ENCODE measurements at regions of chr1 and their contacts with region 1.

Region 1: DNA sequence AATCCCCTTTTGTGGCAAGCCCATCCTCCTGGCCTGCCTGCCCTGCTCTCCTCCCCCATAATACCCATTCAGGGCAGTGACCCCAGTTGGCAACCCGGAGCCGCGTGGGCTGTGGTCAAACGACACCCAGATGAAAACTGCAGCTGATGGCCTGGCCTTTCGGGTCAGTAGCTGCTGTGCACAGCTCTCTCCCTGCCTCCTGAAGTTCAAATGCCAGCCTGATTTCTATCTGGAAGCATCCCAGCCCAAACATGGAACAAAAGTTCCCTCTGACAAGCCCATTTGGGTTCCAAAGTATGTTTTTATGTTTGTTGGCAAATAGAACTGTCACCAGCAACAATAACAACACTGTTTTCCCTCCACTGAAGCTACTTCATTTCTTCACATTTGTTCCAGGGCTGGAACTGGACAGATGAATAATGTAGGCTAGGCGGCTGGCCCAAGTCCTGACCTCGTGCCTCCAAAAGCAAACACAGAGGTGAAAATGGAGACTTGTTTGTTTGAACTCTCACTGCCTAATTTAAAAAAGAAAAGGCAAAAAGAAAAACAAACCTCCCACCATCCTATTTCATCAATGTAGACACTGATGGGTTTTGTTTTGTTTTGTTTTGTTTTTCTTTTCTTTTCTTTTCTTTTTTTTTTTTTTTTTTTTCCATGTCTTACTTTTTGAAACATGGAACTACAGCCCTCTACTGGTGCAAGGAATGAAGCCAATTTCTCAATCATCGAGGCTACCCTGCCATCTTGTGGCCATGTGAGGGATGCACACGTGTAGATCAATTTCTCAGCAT is 179.0 kb downstream of the ADSS2 start:
- DNase-seq: peak; percentile 65 to 76 (median 74)
- H3K4me3 ChIP-seq: no peak overlapping the region
- H3K4me3 Mint-ChIP-seq: no peak overlapping the region
- H3K27ac ChIP-seq: no peak overlapping the region
- H3K27ac Mint-ChIP-seq: no peak overlapping the region
- H3K4me1 ChIP-seq: no peaks in the 10 kb centered on the region
- H3K4me1 Mint-ChIP-seq: peaks cover 0 to 3% (median 1%) of the 10 kb centered on the region in 4 donors
- H3K27me3 ChIP-seq: no peaks in the 10 kb centered on the region
- H3K27me3 Mint-ChIP-seq: peaks cover 0 to 2% of the 10 kb centered on the region in 2 donors

Region 2: DNA sequence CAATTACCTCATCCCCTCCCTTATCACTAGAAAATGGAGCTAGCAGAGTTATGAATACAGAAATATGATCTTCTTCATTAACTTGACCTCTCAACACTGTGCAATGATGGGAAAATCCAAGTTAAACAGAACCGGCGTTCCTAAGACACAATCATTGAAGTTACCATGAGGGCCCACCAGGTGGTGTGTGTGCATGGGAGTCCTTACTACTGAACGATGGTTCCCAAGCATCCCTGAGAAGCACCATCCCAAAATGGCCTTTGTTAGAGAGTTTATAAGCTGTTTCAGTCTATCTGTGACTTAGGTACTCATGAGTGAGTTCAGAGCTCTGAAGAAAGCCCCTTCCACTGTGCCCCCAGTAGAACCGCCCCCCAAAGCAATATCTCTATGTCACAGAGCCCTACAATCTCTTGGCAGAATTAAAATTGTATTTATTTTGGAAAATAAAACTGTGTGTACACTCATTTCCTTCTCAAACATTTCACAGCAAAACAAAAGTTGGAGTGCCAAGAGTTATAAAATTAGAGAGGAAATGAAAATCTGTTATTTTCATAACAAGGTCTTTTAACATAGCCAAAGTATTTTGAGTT is 1805.0 kb before region 1 on chr1:
- CTCF ChIA-PET with region 1: no interaction called
- POLR2A ChIA-PET with region 1: no interaction called
- intact Hi-C with region 1: loop called (anchors 5 kb)
- DNase-seq: peak in 1 of 5 donors; percentile 9
- H3K4me3 ChIP-seq: no peak overlapping the region
- H3K4me3 Mint-ChIP-seq: no peak overlapping the region
- H3K27ac ChIP-seq: no peak overlapping the region
- H3K27ac Mint-ChIP-seq: no peak overlapping the region
- H3K4me1 ChIP-seq: no peaks in the 10 kb centered on the region
- H3K4me1 Mint-ChIP-seq: no peaks in the 10 kb centered on the region
- H3K27me3 ChIP-seq: no peaks in the 10 kb centered on the region
- H3K27me3 Mint-ChIP-seq: peaks cover 2 to 4% of the 10 kb centered on the region in 2 donors

Region 3: GRCh38 chr1:243482141-243483022 is 790.3 kb before region 1 on chr1:
- CTCF ChIA-PET with region 1: no interaction called
- POLR2A ChIA-PET with region 1: no interaction called
- intact Hi-C with region 1: loop called (anchors 10 kb)
- DNase-seq: no peak
- H3K4me3 ChIP-seq: peak overlapping the region in 1 of 2 donors; percentile 19
- H3K4me3 Mint-ChIP-seq: peak overlapping the region; percentile 67 to 84 (median 74)
- H3K27ac ChIP-seq: no peak overlapping the region
- H3K27ac Mint-ChIP-seq: peak overlapping the region in 3 of 7 donors; percentile 9 to 67 (median 23)
- H3K4me1 ChIP-seq: peaks cover 12% of the 10 kb centered on the region
- H3K4me1 Mint-ChIP-seq: peaks cover 15 to 23% (median 20%) of the 10 kb centered on the region in 4 donors
- H3K27me3 ChIP-seq: no peaks in the 10 kb centered on the region
- H3K27me3 Mint-ChIP-seq: peaks cover 1 to 6% of the 10 kb centered on the region in 2 donors

Region 4: DNA sequence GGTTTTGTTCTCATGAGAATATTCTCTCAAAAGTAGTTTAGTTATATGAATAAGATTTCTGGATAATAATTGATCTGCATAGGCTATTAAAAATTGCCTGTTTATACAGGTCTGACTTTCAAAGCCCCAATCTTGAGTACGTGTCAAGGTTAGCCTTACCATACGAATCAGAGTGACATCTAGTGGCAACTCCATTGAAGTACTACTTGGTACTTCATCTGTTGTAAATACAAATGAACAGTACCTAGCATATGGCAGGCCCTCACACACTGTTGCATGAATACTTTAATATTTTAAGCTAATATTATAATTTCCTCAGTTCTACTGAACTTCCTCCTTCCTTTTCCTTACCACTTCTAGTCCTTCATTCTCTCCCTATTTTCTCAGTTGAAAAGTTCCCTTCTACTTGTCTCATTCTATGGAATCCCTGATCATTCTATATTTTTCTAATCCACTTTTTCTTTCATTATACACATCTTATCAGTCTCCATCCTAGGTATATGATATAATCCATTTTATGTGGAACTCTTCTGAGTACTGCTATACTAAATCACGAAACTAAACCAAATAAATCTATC is 523.9 kb before region 1 on chr1:
- CTCF ChIA-PET with region 1: interaction called, 4 read pairs
- POLR2A ChIA-PET with region 1: no interaction called
- intact Hi-C with region 1: loop called (anchors 1 kb)
- DNase-seq: peak in 4 of 5 donors; percentile 32 to 56 (median 44)
- H3K4me3 ChIP-seq: no peak overlapping the region
- H3K4me3 Mint-ChIP-seq: no peak overlapping the region
- H3K27ac ChIP-seq: no peak overlapping the region
- H3K27ac Mint-ChIP-seq: peak overlapping the region in 5 of 7 donors; percentile 14 to 75 (median 29)
- H3K4me1 ChIP-seq: peaks cover 5% of the 10 kb centered on the region
- H3K4me1 Mint-ChIP-seq: peaks cover 28 to 46% (median 36%) of the 10 kb centered on the region in 4 donors
- H3K27me3 ChIP-seq: no peaks in the 10 kb centered on the region
- H3K27me3 Mint-ChIP-seq: no peaks in the 10 kb centered on the region

Region 5: GRCh38 chr1:243946946-243947345 is 325.7 kb before region 1 on chr1:
- CTCF ChIA-PET with region 1: interaction called, 5 read pairs
- POLR2A ChIA-PET with region 1: no interaction called
- intact Hi-C with region 1: loop called (anchors 1 kb)
- DNase-seq: peak in 4 of 5 donors; percentile 34 to 41 (median 38)
- H3K4me3 ChIP-seq: no peak overlapping the region
- H3K4me3 Mint-ChIP-seq: peak overlapping the region in 1 of 8 donors; percentile 73
- H3K27ac ChIP-seq: no peak overlapping the region
- H3K27ac Mint-ChIP-seq: peak overlapping the region in 1 of 7 donors; percentile 66
- H3K4me1 ChIP-seq: no peaks in the 10 kb centered on the region
- H3K4me1 Mint-ChIP-seq: peaks cover 0 to under 1% (median 0%) of the 10 kb centered on the region in 4 donors
- H3K27me3 ChIP-seq: no peaks in the 10 kb centered on the region
- H3K27me3 Mint-ChIP-seq: peaks cover 0 to 2% of the 10 kb centered on the region in 2 donors

Region 6: GRCh38 chr1:244302889-244303613 is 30.4 kb after region 1 on chr1:
- CTCF ChIA-PET with region 1: interaction called, 9 read pairs
- POLR2A ChIA-PET with region 1: no interaction called
- intact Hi-C with region 1: loop called (anchors 1 kb)
- DNase-seq: no peak
- H3K4me3 ChIP-seq: no peak overlapping the region
- H3K4me3 Mint-ChIP-seq: no peak overlapping the region
- H3K27ac ChIP-seq: no peak overlapping the region
- H3K27ac Mint-ChIP-seq: no peak overlapping the region
- H3K4me1 ChIP-seq: peaks cover 10% of the 10 kb centered on the region
- H3K4me1 Mint-ChIP-seq: peaks cover 6 to 14% (median 8%) of the 10 kb centered on the region in 4 donors
- H3K27me3 ChIP-seq: no peaks in the 10 kb centered on the region
- H3K27me3 Mint-ChIP-seq: no peaks in the 10 kb centered on the region

Region 7: DNA sequence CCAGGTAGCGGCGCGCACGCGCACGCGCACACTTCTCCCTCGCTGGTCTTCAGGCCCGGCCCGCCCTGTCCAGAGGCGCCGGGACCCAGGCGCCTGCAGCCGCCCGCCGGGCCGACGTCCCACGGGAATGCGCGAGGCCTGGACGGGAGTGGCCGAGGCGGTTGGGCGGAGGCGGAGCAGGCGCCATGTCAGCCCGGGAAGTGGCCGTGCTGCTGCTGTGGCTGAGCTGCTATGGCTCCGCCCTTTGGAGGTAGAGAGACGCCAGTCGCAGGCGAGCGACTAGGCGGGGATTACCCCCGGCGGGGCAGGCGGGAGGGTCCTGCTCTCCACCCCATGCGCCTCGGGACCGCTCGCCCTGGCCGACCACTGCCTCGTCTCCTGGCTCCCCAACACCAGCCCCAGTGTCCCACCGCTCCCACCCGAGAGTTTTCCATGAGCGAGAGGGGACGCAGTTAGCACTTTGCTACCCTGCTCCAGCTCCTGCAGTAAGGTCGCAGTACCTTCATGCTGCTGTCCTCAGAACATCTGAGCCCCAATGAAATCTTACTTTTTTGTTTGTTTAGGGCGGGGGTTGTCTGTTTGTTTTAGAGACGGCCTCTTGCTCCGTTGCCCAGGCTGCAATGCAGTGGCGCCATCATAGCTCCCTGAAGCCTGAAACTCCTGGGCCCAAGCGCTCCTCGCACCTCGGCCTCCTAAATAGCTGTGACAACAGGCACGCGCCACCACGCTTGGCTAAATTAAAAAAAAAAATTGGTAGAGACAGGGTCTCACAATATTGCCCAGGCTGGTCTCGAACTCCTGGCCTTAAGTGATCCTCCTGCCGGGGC is 188.8 kb after region 1 on chr1 and contains the start of gene CATSPERE:
- CTCF ChIA-PET with region 1: no interaction called
- POLR2A ChIA-PET with region 1: no interaction called
- intact Hi-C with region 1: no loop called
- DNase-seq: peak; percentile 72 to 80 (median 77)
- H3K4me3 ChIP-seq: peak within 1 kb of the TSS; percentile 70 to 89
- H3K4me3 Mint-ChIP-seq: peak within 1 kb of the TSS; percentile 78 to 90 (median 84)
- H3K27ac ChIP-seq: peak within 1 kb of the TSS; percentile 70
- H3K27ac Mint-ChIP-seq: peak within 1 kb of the TSS; percentile 62 to 98 (median 88)
- H3K4me1 ChIP-seq: peaks cover 9% of the 10 kb centered on the region
- H3K4me1 Mint-ChIP-seq: peaks cover 7 to 14% (median 11%) of the 10 kb centered on the region in 4 donors
- H3K27me3 ChIP-seq: no peaks in the 10 kb centered on the region
- H3K27me3 Mint-ChIP-seq: no peaks in the 10 kb centered on the region
- total RNA-seq, gene CATSPERE: 1.4 to 2.3 TPM

Measured in CD4-positive, alpha-beta memory T cell (primary cell).